ENCODE measurements at regions of chr9 and their contacts with region 1.

Region 1: DNA sequence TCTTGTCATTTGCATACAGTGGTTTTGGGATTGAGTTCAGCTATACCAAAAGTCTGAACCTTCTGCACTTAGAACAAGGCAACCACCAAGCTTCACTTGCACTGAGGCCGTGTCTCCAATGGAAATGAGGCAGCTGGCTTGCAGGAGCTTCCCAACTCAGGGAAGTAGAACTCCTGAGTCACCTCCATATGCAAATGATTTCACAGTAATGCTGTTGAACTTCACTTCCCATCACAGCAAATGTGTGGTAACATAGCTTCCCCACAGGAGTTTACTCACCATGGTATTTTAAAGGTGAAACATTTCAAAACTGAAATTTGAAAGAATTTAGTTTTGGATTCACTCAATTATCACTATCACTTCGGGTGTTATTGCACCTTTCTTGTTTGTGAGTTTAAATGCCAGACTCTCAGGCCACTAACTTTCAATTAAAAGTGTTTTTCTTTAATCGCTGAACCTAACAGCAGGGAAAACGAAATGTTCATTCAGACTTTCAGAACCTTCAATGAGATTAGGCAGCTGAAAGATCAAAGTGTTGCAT is 9.0 kb downstream of the CD274 start:
- DNase-seq: peak; percentile 47
- ATAC-seq: peak; percentile 67
- H3K4me3 Mint-ChIP-seq: peak overlapping the region; percentile 68
- H3K27ac Mint-ChIP-seq: peak overlapping the region; percentile 89
- H3K4me1 Mint-ChIP-seq: peaks cover 80% of the 10 kb centered on the region
- H3K27me3 Mint-ChIP-seq: no peaks in the 10 kb centered on the region

Region 2: GRCh38 chr9:5493679-5494511 is 34.5 kb after region 1 on chr9:
- CTCF ChIA-PET with region 1: no interaction called
- POLR2A ChIA-PET with region 1: interaction called, 3 read pairs
- intact Hi-C with region 1: loop called (anchors 1 kb)
- DNase-seq: peak; percentile 55
- ATAC-seq: peak; percentile 87
- H3K4me3 Mint-ChIP-seq: no peak overlapping the region
- H3K27ac Mint-ChIP-seq: peak overlapping the region; percentile 82
- H3K4me1 Mint-ChIP-seq: peaks cover 19% of the 10 kb centered on the region
- H3K27me3 Mint-ChIP-seq: peaks cover 2% of the 10 kb centered on the region

Region 3: GRCh38 chr9:5510360-5510931 is 51.1 kb after region 1 on chr9 and contains the start of gene PDCD1LG2:
- CTCF ChIA-PET with region 1: interaction called, 5 read pairs
- POLR2A ChIA-PET with region 1: interaction called, 6 read pairs
- intact Hi-C with region 1: loop called (anchors 1 kb)
- DNase-seq: peak; percentile 78
- ATAC-seq: peak; percentile 92
- H3K4me3 Mint-ChIP-seq: peak within 1 kb of the TSS; percentile 64
- H3K27ac Mint-ChIP-seq: peak within 1 kb of the TSS; percentile 89
- H3K4me1 Mint-ChIP-seq: peaks cover 50% of the 10 kb centered on the region
- H3K27me3 Mint-ChIP-seq: no peaks in the 10 kb centered on the region
- total RNA-seq, gene PDCD1LG2: 0.43 to 0.81 TPM

Region 4: GRCh38 chr9:5582835-5583195 is 123.5 kb after region 1 on chr9:
- CTCF ChIA-PET with region 1: interaction called, 14 read pairs
- POLR2A ChIA-PET with region 1: interaction called, 3 read pairs
- intact Hi-C with region 1: loop called (anchors 1 to 2 kb)
- DNase-seq: peak; percentile 69
- ATAC-seq: peak; percentile 42
- H3K4me3 Mint-ChIP-seq: no peak overlapping the region
- H3K27ac Mint-ChIP-seq: peak overlapping the region; percentile 85
- H3K4me1 Mint-ChIP-seq: peaks cover 74% of the 10 kb centered on the region
- H3K27me3 Mint-ChIP-seq: no peaks in the 10 kb centered on the region

Region 5: GRCh38 chr9:5764130-5764868 is 304.9 kb after region 1 on chr9:
- CTCF ChIA-PET with region 1: no interaction called
- POLR2A ChIA-PET with region 1: no interaction called
- intact Hi-C with region 1: loop called in 1 of 2 experiments (anchors 5 kb)
- DNase-seq: peak; percentile 31
- ATAC-seq: peak; percentile 65
- H3K4me3 Mint-ChIP-seq: no peak overlapping the region
- H3K27ac Mint-ChIP-seq: peak overlapping the region; percentile 77
- H3K4me1 Mint-ChIP-seq: peaks cover 62% of the 10 kb centered on the region
- H3K27me3 Mint-ChIP-seq: no peaks in the 10 kb centered on the region

Region 6: GRCh38 chr9:5786370-5787127 is 327.2 kb after region 1 on chr9:
- CTCF ChIA-PET with region 1: no interaction called
- POLR2A ChIA-PET with region 1: no interaction called
- intact Hi-C with region 1: no loop called
- DNase-seq: no peak
- ATAC-seq: no peak
- H3K4me3 Mint-ChIP-seq: no peak overlapping the region
- H3K27ac Mint-ChIP-seq: peak overlapping the region; percentile 4
- H3K4me1 Mint-ChIP-seq: peaks cover 50% of the 10 kb centered on the region
- H3K27me3 Mint-ChIP-seq: no peaks in the 10 kb centered on the region

Region 7: GRCh38 chr9:5843794-5844504 is 384.6 kb after region 1 on chr9:
- CTCF ChIA-PET with region 1: no interaction called
- POLR2A ChIA-PET with region 1: no interaction called
- intact Hi-C with region 1: loop called (anchors 5 to 10 kb)
- DNase-seq: no peak
- ATAC-seq: no peak
- H3K4me3 Mint-ChIP-seq: peak overlapping the region; percentile 26
- H3K27ac Mint-ChIP-seq: peak overlapping the region; percentile 45
- H3K4me1 Mint-ChIP-seq: peaks cover 58% of the 10 kb centered on the region
- H3K27me3 Mint-ChIP-seq: no peaks in the 10 kb centered on the region

Measured in activated CD4-positive, alpha-beta T cell treated with anti-CD3 and anti-CD28 coated beads for 36 hours (primary cell).